H1 (cell line): ENCODE measurements at regions of chr1 and their contacts with region 1.

Region 1: DNA sequence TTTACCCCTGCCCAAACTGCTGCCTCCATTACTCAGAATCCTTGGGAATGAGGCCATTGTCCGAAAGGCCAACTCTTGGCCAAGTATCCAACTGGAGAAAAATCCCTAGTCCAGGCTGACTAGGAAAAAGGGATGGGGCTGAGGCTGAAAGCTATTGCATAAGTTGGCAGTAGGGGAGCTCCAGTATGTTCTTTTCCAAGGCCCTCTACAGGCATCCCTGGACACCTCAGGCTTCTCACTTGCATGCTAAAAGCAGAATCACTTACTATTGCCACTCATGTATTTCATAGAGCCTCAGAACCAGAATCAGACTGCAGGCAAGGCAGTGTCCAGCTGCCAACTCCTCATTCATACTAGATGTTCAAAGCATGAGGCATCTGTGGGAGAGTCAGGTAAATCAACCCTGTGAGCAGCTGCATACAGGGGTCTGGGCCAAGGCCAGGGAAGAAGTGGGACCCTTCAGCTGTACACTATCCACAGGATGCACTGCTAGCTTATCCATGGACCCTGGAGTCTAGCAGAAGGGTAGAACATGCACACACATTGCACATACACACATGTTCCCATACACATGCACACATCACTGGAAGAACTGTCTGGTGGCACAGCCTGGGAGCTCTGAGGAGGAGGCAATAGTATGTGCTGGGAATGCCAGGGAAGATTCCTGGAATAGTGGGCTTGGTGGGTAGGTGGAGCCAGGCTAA is 195.3 kb downstream of the C1orf94 start:
- DNase-seq: peak in 1 of 2 experiments; percentile 37
- H3K4me3 ChIP-seq: no peak overlapping the region
- H3K27ac ChIP-seq: no peak overlapping the region
- H3K4me1 ChIP-seq: no peaks in the 10 kb centered on the region
- H3K27me3 ChIP-seq: no peaks in the 10 kb centered on the region; a peak in 2 of 7 replicates
- CTCF ChIP-seq: peak in 2 of 3 experiments; percentile 23 to 26; a peak in 3 of 4 replicates
- EP300 ChIP-seq: no peak
- POLR2A ChIP-seq: no peak
- RAD21 ChIP-seq: peak in 1 of 2 experiments; percentile 24; a peak in 1 of 4 replicates

Region 2: DNA sequence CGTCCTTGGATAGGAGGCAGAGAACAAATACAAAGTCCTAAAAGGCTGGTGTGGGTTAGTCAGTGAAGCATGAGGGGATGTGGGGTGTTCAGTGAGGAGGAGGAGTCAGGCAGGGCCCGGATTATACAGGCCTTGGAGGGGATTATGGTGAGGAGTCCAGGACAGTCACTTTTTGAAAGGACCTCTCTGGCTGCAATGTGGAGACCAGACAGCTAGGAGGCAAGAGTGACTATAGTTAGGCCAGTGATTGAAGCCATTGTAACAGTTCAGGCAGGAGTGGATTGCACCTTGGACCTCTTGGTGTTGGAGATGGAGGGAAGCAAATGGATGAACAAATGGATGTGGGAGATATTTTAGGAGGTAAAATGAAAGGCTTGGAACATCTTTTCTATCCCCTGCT is 79.5 kb before region 1 on chr1:
- CTCF ChIA-PET with region 1: no interaction called
- POLR2A ChIA-PET with region 1: no interaction called
- DNase-seq: no peak
- H3K4me3 ChIP-seq: no peak overlapping the region
- H3K27ac ChIP-seq: no peak overlapping the region
- H3K4me1 ChIP-seq: no peaks in the 10 kb centered on the region
- H3K27me3 ChIP-seq: no peaks in the 10 kb centered on the region; a peak in 2 of 7 replicates
- CTCF ChIP-seq: peak in 2 of 3 experiments; percentile 38 to 57; a peak in 3 of 4 replicates
- EP300 ChIP-seq: no peak
- POLR2A ChIP-seq: no peak
- RAD21 ChIP-seq: peak; percentile 52 to 66

Region 3: GRCh38 chr1:34358636-34359035 is 13.3 kb before region 1 on chr1:
- CTCF ChIA-PET with region 1: interaction called, 11 read pairs
- POLR2A ChIA-PET with region 1: interaction called, 3 read pairs
- DNase-seq: no peak
- H3K4me3 ChIP-seq: no peak overlapping the region
- H3K27ac ChIP-seq: no peak overlapping the region
- H3K4me1 ChIP-seq: no peaks in the 10 kb centered on the region
- H3K27me3 ChIP-seq: no peaks in the 10 kb centered on the region
- CTCF ChIP-seq: no peak
- EP300 ChIP-seq: no peak
- POLR2A ChIP-seq: no peak
- RAD21 ChIP-seq: no peak